ENCODE measurements at regions of chr3 and their contacts with region 1.

Region 1: DNA sequence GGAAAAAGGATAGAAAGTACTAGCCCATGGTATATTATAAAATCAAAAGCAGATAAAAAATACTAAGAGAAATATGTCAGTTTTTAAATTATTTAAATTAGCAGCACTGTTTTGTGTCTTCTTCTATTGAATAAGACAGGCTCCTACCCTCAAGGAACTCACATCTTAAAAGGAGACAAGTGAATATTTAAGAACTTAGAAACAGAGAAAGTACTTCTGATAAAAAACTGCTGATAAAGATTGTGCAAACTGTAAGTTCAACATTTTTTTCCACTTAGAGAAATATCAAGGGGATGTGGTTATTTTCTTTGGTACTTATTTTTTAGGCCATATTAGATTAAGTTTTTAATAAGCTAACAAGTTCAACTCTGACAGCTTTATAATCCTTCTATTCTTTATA is 3.0 kb upstream of the ANKRD28 start:
- DNase-seq: no peak
- H3K4me3 ChIP-seq: no peak overlapping the region
- H3K27ac ChIP-seq: peak overlapping the region; percentile 83 to 100; a peak in 3 of 4 replicates
- H3K4me1 ChIP-seq: peaks cover 21 to 35% of the 10 kb centered on the region in 2 experiments; a peak in 3 of 4 replicates
- H3K27me3 ChIP-seq: no peaks in the 10 kb centered on the region
- CTCF ChIP-seq: no peak
- EP300 ChIP-seq: peak; percentile 4 to 53; a peak in 1 of 4 replicates
- RAD21 ChIP-seq: no peak

Region 2: GRCh38 chr3:15629860-15630597 is 170.8 kb before region 1 on chr3:
- CTCF ChIA-PET with region 1: interaction called, 11 read pairs
- POLR2A ChIA-PET with region 1: no interaction called
- DNase-seq: peak; percentile 76
- H3K4me3 ChIP-seq: no peak overlapping the region; a peak in 2 of 4 replicates
- H3K27ac ChIP-seq: peak overlapping the region; percentile 79 to 94; a peak in 3 of 4 replicates
- H3K4me1 ChIP-seq: peaks cover 26 to 27% of the 10 kb centered on the region in 2 experiments
- H3K27me3 ChIP-seq: no peaks in the 10 kb centered on the region
- CTCF ChIP-seq: peak; percentile 87
- EP300 ChIP-seq: no peak
- RAD21 ChIP-seq: peak; percentile 93

Region 3: GRCh38 chr3:15812183-15812582 is 11.4 kb after region 1 on chr3:
- CTCF ChIA-PET with region 1: interaction called, 14 read pairs
- POLR2A ChIA-PET with region 1: no interaction called
- DNase-seq: peak; percentile 21
- H3K4me3 ChIP-seq: no peak overlapping the region
- H3K27ac ChIP-seq: no peak overlapping the region
- H3K4me1 ChIP-seq: peaks cover 0 to 5% of the 10 kb centered on the region in 2 experiments; a peak in 2 of 4 replicates
- H3K27me3 ChIP-seq: no peaks in the 10 kb centered on the region
- CTCF ChIP-seq: peak; percentile 70
- EP300 ChIP-seq: no peak
- RAD21 ChIP-seq: peak; percentile 75